T-cell (primary cell): ENCODE measurements at regions of chr1 and their contacts with region 1.

Region 1: DNA sequence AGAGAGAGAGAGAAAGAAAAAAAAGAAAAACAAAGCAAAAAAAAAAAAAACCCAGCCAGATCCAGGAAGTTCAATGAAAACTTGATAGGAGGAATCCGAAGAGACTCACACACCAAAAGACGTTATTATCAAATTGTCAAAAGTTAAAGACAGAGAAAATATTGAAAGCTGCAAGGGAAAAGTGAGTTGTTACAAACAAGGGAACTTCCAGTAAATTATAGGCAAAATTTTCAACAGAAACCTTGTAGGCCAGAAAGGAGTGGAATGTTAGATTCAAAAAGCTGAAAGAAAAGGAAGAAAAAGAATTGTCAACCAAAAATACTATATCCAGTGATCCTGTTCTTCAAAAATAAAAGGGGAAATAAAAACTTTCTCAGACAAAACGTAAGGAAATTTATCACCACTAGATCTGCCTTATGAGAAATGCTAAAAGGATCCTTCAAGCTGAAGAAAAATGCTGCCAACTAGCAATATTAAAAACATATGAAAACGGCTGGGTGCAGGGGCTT is 23.6 kb downstream of the ERO1B start:
- DNase-seq: no peak
- ATAC-seq: no peak
- H3K4me3 ChIP-seq: no peak overlapping the region
- H3K4me3 Mint-ChIP-seq: no peak overlapping the region
- H3K27ac ChIP-seq: no peak overlapping the region
- H3K27ac Mint-ChIP-seq: no peak overlapping the region
- H3K4me1 ChIP-seq: peaks cover 0 to 3% of the 10 kb centered on the region in 2 experiments
- H3K4me1 Mint-ChIP-seq: peaks cover 20 to 34% (median 26%) of the 10 kb centered on the region in 3 donors
- H3K27me3 ChIP-seq: no peaks in the 10 kb centered on the region
- H3K27me3 Mint-ChIP-seq: no peaks in the 10 kb centered on the region

Region 2: GRCh38 chr1:236228411-236228810 is 29.8 kb before region 1 on chr1:
- CTCF ChIA-PET with region 1: no interaction called
- POLR2A ChIA-PET with region 1: interaction called in 1 of 2 experiments, 10 read pairs
- DNase-seq: no peak
- ATAC-seq: no peak
- H3K4me3 ChIP-seq: no peak overlapping the region
- H3K4me3 Mint-ChIP-seq: no peak overlapping the region
- H3K27ac ChIP-seq: no peak overlapping the region
- H3K27ac Mint-ChIP-seq: no peak overlapping the region
- H3K4me1 ChIP-seq: no peaks in the 10 kb centered on the region
- H3K4me1 Mint-ChIP-seq: no peaks in the 10 kb centered on the region
- H3K27me3 ChIP-seq: no peaks in the 10 kb centered on the region
- H3K27me3 Mint-ChIP-seq: no peaks in the 10 kb centered on the region

Region 3: DNA sequence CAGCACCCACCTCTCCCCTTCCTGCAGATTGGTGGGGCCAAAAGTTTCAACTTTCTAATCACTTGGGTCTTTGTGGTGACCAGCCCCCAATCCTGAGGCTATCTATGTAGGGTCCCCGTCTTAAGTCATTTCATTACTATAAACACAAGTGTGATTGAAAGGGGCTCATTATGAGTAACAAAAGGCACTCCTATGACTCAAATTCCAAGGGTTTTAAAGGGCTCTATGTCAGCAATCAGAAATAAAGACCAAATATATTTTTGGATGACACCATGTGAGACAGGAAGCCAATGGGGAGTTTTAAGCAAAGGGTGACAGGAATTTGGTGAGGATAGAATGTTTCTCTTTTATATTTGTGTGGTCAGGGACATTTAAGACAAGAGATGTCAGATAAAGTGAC is 17.4 kb after region 1 on chr1:
- CTCF ChIA-PET with region 1: no interaction called
- POLR2A ChIA-PET with region 1: no interaction called
- DNase-seq: no peak
- ATAC-seq: no peak
- H3K4me3 ChIP-seq: no peak overlapping the region
- H3K4me3 Mint-ChIP-seq: no peak overlapping the region
- H3K27ac ChIP-seq: no peak overlapping the region
- H3K27ac Mint-ChIP-seq: no peak overlapping the region
- H3K4me1 ChIP-seq: peaks cover 2 to 3% of the 10 kb centered on the region in 2 experiments
- H3K4me1 Mint-ChIP-seq: peaks cover 46 to 50% (median 50%) of the 10 kb centered on the region in 3 donors
- H3K27me3 ChIP-seq: no peaks in the 10 kb centered on the region
- H3K27me3 Mint-ChIP-seq: no peaks in the 10 kb centered on the region